Activated CD4-positive, alpha-beta T cell treated with anti-CD3 and anti-CD28 coated beads, Interleukin-2, amount 10 ng/mL, durations not matched to agents 7 days and 5 days (primary cell): ENCODE measurements at regions of chr12 and their contacts with region 1.

Region 1: GRCh38 chr12:123580772-123581171 is 3.6 kb upstream of the TMED2 start:
- DNase-seq: no peak
- H3K4me3 Mint-ChIP-seq: no peak overlapping the region
- H3K27ac Mint-ChIP-seq: no peak overlapping the region
- H3K4me1 Mint-ChIP-seq: peaks cover 23% of the 10 kb centered on the region
- H3K27me3 Mint-ChIP-seq: no peaks in the 10 kb centered on the region

Region 2: DNA sequence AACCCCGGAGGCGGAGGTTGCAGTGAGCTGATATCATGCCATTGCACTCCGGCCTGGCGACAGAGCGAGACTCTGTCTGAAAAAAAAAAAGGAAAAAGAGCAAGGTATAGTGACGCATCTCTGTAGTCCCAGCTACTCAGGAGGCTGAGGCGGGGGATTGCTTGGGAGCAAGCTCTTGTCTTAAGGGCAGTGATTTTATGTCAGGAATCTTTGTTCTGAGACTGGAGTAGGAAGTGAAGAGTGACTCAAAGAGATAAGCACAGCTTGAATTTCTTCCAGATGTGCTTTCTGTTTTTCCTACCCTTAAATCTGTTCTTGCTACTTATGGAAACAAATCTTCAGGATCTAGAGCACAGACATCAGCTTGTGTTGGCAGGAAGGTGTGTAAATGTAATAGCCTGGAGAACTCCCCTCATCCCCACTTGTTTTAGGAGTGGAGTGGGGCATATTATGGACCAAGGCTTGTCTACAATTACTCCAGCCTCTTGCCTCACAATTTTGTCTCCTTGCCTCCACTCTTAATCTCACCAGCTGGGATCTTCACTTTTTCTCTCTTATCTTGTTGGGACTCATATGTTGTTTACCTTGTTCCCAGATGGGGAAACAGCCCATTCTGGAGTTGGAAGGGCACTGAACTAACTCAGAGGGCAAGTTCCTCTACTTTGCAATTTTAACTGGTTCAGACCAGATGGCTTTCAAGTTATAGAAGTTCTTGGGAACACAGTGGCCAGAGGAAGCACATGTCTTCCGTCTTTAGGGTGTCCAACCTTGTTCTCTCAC is 11.1 kb after region 1 on chr12:
- CTCF ChIA-PET with region 1: interaction called, 13 read pairs
- POLR2A ChIA-PET with region 1: no interaction called
- DNase-seq: no peak
- H3K4me3 Mint-ChIP-seq: no peak overlapping the region
- H3K27ac Mint-ChIP-seq: no peak overlapping the region
- H3K4me1 Mint-ChIP-seq: peaks cover 33% of the 10 kb centered on the region
- H3K27me3 Mint-ChIP-seq: no peaks in the 10 kb centered on the region